Right ventricle myocardium inferior (tissue), 1 donor: ENCODE measurements at regions of chr4 and their contacts with region 1.

Region 1: GRCh38 chr4:51842554-51843308 is at the start of gene DCUN1D4:
- DNase-seq: peak; percentile 100
- ATAC-seq: peak; percentile 95
- total RNA-seq, gene DCUN1D4: 38.7 TPM

Region 2: GRCh38 chr4:51885363-51885762 is 42.6 kb after region 1 on chr4:
- intact Hi-C with region 1: no loop called
- DNase-seq: no peak
- ATAC-seq: no peak

Region 3: DNA sequence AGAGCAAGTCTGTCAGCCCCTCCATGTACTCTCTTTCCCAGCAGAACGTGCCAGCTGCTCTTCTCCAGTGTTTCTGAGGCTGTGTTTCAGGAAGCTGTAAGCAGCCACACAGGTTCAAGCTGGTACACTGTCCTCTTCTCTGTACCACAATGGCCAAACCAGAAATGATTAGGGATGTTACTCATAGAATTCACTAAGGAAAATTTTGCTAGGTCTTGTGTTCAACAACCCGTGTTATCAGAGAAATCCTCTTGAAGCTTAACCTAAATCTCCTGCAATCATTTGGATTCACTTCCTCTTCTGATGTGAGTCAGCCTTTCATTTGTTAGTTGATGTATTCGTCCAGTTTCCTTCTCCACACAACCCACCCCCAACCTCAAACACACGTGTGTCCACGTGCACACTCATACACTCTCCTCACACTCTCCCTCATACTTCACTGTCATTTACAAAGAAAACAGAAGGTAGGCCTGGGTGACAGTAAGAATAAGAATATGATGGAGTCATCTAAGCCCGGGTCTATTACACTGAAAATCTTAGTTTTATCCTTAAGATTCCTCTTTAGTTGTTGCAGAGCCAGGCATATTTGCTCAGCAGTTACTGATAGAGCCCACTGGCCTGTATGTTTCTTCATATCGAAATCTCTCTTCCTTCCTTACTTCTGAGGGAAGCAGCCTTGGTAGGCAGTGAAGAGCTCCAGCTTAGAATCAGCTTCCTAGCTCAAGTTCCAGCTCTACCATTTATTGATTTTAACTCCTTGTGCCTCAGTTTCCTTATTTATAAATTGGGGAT is 63.6 kb after region 1 on chr4:
- intact Hi-C with region 1: loop called (anchors 5 kb)
- DNase-seq: no peak
- ATAC-seq: no peak

Region 4: GRCh38 chr4:52037689-52038102 is 195.0 kb after region 1 on chr4:
- intact Hi-C with region 1: loop called (anchors 2 kb)
- DNase-seq: peak; percentile 70
- ATAC-seq: peak; percentile 52